ENCODE measurements at regions of chr16 and their contacts with region 1.

Region 1: DNA sequence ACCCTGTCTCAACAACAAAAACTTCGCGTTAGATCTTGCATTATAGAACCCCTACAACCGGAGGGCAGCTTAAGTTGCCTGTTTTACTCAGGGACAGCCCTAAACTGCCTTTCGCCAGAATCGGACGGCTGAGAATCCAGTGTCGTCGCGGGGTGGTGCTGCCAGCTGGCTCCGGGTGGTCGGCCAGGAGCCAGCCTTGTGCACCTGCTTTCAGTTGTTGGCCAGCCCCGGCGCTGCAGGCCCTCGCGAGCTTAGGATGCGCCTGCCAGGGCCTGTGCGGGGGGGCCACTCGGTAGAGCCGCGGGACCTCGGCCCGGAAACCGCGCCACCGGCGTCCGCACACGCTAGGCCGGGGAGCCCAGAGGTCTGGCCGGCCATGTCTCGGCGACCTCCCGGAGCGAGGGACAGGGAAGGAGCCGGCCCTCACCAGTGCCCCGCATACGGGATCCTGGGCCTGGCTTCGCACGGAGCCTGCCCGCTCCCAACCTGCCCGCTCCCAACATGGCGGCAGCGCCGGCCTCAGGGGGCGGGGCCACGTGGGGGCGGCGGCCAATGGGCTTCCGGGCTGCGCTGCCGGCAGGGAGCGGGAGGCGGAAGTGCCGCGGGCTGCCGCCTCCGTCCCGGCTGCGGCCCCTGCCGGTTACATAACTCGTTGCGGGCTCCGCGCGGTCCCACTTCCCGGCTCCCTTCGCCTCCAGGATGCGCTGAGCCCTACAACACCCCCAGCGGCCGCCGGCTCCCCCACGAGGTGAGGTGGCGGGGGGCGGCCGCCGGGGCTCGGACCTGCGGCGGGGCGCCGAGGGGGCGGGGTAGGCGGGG is 14.2 kb downstream of the NAA60 start:
- DNase-seq: peak; percentile 85
- H3K4me3 ChIP-seq: peak overlapping the region; percentile 78 to 81
- H3K27ac ChIP-seq: peak overlapping the region; percentile 93 to 97
- H3K4me1 ChIP-seq: peaks cover 21% of the 10 kb centered on the region
- H3K27me3 ChIP-seq: no peaks in the 10 kb centered on the region
- CTCF ChIP-seq: peak; percentile 43 to 71 (median 54)
- POLR2A ChIP-seq: peak; percentile 14

Region 2: GRCh38 chr16:3264137-3265036 is 193.3 kb before region 1 on chr16:
- intact Hi-C with region 1: loop called (anchors 2 kb)
- DNase-seq: peak; percentile 96
- H3K4me3 ChIP-seq: peak overlapping the region; percentile 61 to 63
- H3K27ac ChIP-seq: peak overlapping the region; percentile 95 to 96
- H3K4me1 ChIP-seq: no peaks in the 10 kb centered on the region
- H3K27me3 ChIP-seq: no peaks in the 10 kb centered on the region
- CTCF ChIP-seq: peak in 1 of 4 experiments; percentile 9
- POLR2A ChIP-seq: peak; percentile 81

Region 3: GRCh38 chr16:3400779-3401688 is 56.6 kb before region 1 on chr16 and contains the starts of genes ZNF174 and ZSCAN32:
- intact Hi-C with region 1: loop called (anchors 2 kb)
- DNase-seq: peak; percentile 99
- H3K4me3 ChIP-seq: peak within 1 kb of the TSS; percentile 57 to 65
- H3K27ac ChIP-seq: peak within 1 kb of the TSS; percentile 68 to 70
- H3K4me1 ChIP-seq: no peaks in the 10 kb centered on the region
- H3K27me3 ChIP-seq: no peaks in the 10 kb centered on the region
- CTCF ChIP-seq: peak in 2 of 4 experiments; percentile 23 to 36
- POLR2A ChIP-seq: peak; percentile 67
- total RNA-seq, gene ZNF174: 11.2 to 19.8 TPM
- total RNA-seq, gene ZSCAN32: 15.2 to 17.4 TPM

Region 4: GRCh38 chr16:3696425-3697218 is 239.0 kb after region 1 on chr16:
- intact Hi-C with region 1: no loop called
- DNase-seq: peak; percentile 69
- H3K4me3 ChIP-seq: no peak overlapping the region
- H3K27ac ChIP-seq: peak overlapping the region; percentile 10 to 45
- H3K4me1 ChIP-seq: no peaks in the 10 kb centered on the region
- H3K27me3 ChIP-seq: no peaks in the 10 kb centered on the region
- CTCF ChIP-seq: no peak
- POLR2A ChIP-seq: no peak

Measured in prostate gland (tissue), 2 donors.